ENCODE measurements at regions of chr5 and their contacts with region 1.

Region 1: GRCh38 chr5:37174928-37175327 is 74.2 kb downstream of the CPLANE1 start:
- DNase-seq: no peak

Region 2: GRCh38 chr5:37029436-37029835 is 145.5 kb before region 1 on chr5:
- intact Hi-C with region 1: loop called (anchors 10 kb)
- DNase-seq: no peak